CD4-positive, alpha-beta T cell (primary cell): ENCODE measurements at regions of chr19 and their contacts with region 1.

Region 1: GRCh38 chr19:39445265-39446111 is at the start of gene SUPT5H:
- DNase-seq: peak; percentile 94 to 100 (median 97)
- ATAC-seq: peak; percentile 93
- H3K4me3 ChIP-seq: peak within 1 kb of the TSS; percentile 99
- H3K4me3 Mint-ChIP-seq: peak within 1 kb of the TSS; percentile 98
- H3K27ac ChIP-seq: peak within 1 kb of the TSS; percentile 89 to 94
- H3K27ac Mint-ChIP-seq: peak within 1 kb of the TSS; percentile 91
- H3K4me1 ChIP-seq: peaks cover 54% of the 10 kb centered on the region
- H3K4me1 Mint-ChIP-seq: peaks cover 56% of the 10 kb centered on the region
- H3K27me3 ChIP-seq: no peaks in the 10 kb centered on the region
- H3K27me3 Mint-ChIP-seq: no peaks in the 10 kb centered on the region
- CTCF ChIP-seq: no peak
- total RNA-seq, gene SUPT5H: 322 to 333 TPM

Region 2: GRCh38 chr19:39341719-39342604 is 103.5 kb before region 1 on chr19 and contains the start of gene SAMD4B:
- CTCF ChIA-PET with region 1: no interaction called
- POLR2A ChIA-PET with region 1: interaction called, 14 read pairs
- intact Hi-C with region 1: no loop called
- DNase-seq: peak; percentile 98 to 100 (median 99)
- ATAC-seq: peak; percentile 88
- H3K4me3 ChIP-seq: peak within 1 kb of the TSS; percentile 85
- H3K4me3 Mint-ChIP-seq: peak within 1 kb of the TSS; percentile 99
- H3K27ac ChIP-seq: peak within 1 kb of the TSS; percentile 65 to 82
- H3K27ac Mint-ChIP-seq: peak within 1 kb of the TSS; percentile 91
- H3K4me1 ChIP-seq: peaks cover 64% of the 10 kb centered on the region
- H3K4me1 Mint-ChIP-seq: peaks cover 77% of the 10 kb centered on the region
- H3K27me3 ChIP-seq: no peaks in the 10 kb centered on the region
- H3K27me3 Mint-ChIP-seq: no peaks in the 10 kb centered on the region
- CTCF ChIP-seq: peak; percentile 72
- total RNA-seq, gene SAMD4B: 65.0 to 66.9 TPM

Region 3: GRCh38 chr19:39406656-39407393 is 38.7 kb before region 1 on chr19 and contains the start of gene ZFP36:
- CTCF ChIA-PET with region 1: interaction called, 8 read pairs
- POLR2A ChIA-PET with region 1: interaction called, 17 read pairs
- intact Hi-C with region 1: loop called in 1 of 2 experiments (anchors 1 kb)
- DNase-seq: peak; percentile 80 to 95 (median 91)
- ATAC-seq: peak; percentile 11
- H3K4me3 ChIP-seq: peak within 1 kb of the TSS; percentile 100
- H3K4me3 Mint-ChIP-seq: peak within 1 kb of the TSS; percentile 99
- H3K27ac ChIP-seq: peak within 1 kb of the TSS; percentile 100
- H3K27ac Mint-ChIP-seq: peak within 1 kb of the TSS; percentile 98
- H3K4me1 ChIP-seq: peaks cover 85% of the 10 kb centered on the region
- H3K4me1 Mint-ChIP-seq: peaks cover 56% of the 10 kb centered on the region
- H3K27me3 ChIP-seq: no peaks in the 10 kb centered on the region
- H3K27me3 Mint-ChIP-seq: peaks cover 7% of the 10 kb centered on the region
- CTCF ChIP-seq: no peak
- total RNA-seq, gene ZFP36: 1,278 to 1,362 TPM

Region 4: DNA sequence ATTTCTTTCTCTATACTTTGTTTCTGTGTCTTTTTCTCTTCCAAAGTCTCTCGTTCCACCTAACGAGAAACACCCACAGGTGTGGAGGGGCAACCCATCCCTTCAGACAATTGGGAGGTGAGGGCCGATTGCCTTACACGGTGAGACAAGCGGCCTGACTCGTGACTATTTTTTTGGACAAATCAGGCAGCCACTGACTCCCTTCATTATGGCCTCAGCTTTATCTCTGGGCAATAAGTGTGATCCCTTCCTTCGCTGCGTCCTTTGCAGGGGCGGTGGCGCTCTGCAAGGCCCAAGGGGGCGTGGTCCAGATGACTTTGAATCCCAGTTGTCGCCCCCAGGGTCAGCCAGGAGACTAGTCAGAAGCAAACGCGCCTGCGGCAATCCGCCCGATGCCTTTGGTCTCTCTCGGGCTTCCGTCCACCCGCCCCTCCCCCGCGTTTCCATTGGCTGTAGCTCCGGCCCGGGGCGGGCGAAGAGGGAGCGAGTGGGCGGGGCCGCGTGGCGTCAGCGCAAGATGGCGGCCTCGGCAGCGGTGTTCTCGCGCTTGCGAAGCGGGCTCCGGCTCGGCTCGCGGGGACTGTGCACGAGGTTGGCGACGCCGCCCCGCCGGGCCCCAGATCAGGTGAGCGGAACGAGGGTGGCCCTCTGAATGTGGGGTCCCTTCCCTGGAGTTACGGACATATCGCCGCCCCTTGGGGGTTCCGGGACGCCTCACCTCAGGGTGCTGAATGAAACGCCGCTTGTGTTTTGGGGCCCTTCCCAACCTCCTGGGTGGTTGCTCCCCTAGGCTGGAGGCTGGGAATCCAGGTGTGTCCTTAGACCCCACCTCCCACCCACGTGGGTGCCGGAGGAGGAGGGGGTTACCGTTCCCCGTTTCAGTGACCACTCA is 35.1 kb after region 1 on chr19 and contains the start of gene TIMM50:
- CTCF ChIA-PET with region 1: interaction called, 3 read pairs
- POLR2A ChIA-PET with region 1: interaction called, 31 read pairs
- intact Hi-C with region 1: loop called (anchors 1 to 5 kb)
- DNase-seq: peak; percentile 94 to 99 (median 97)
- ATAC-seq: peak; percentile 97
- H3K4me3 ChIP-seq: peak within 1 kb of the TSS; percentile 99
- H3K4me3 Mint-ChIP-seq: peak within 1 kb of the TSS; percentile 92
- H3K27ac ChIP-seq: peak within 1 kb of the TSS; percentile 62 to 70
- H3K27ac Mint-ChIP-seq: peak within 1 kb of the TSS; percentile 73
- H3K4me1 ChIP-seq: peaks cover 23% of the 10 kb centered on the region
- H3K4me1 Mint-ChIP-seq: peaks cover 31% of the 10 kb centered on the region
- H3K27me3 ChIP-seq: no peaks in the 10 kb centered on the region
- H3K27me3 Mint-ChIP-seq: no peaks in the 10 kb centered on the region
- CTCF ChIP-seq: no peak
- total RNA-seq, gene TIMM50: 38.3 to 43.4 TPM

Region 5: GRCh38 chr19:39671738-39672363 is 226.4 kb after region 1 on chr19:
- CTCF ChIA-PET with region 1: no interaction called
- POLR2A ChIA-PET with region 1: interaction called, 3 read pairs
- intact Hi-C with region 1: loop called (anchors 1 to 2 kb)
- DNase-seq: peak in 10 of 14 experiments; percentile 19 to 81 (median 45)
- ATAC-seq: peak; percentile 83
- H3K4me3 ChIP-seq: no peak overlapping the region
- H3K4me3 Mint-ChIP-seq: no peak overlapping the region
- H3K27ac ChIP-seq: no peak overlapping the region
- H3K27ac Mint-ChIP-seq: peak overlapping the region; percentile 2
- H3K4me1 ChIP-seq: peaks cover 20% of the 10 kb centered on the region
- H3K4me1 Mint-ChIP-seq: peaks cover 26% of the 10 kb centered on the region
- H3K27me3 ChIP-seq: no peaks in the 10 kb centered on the region
- H3K27me3 Mint-ChIP-seq: peaks cover 11% of the 10 kb centered on the region
- CTCF ChIP-seq: peak; percentile 69